ENCODE measurements at regions of chr12 and their contacts with region 1.

Region 1: DNA sequence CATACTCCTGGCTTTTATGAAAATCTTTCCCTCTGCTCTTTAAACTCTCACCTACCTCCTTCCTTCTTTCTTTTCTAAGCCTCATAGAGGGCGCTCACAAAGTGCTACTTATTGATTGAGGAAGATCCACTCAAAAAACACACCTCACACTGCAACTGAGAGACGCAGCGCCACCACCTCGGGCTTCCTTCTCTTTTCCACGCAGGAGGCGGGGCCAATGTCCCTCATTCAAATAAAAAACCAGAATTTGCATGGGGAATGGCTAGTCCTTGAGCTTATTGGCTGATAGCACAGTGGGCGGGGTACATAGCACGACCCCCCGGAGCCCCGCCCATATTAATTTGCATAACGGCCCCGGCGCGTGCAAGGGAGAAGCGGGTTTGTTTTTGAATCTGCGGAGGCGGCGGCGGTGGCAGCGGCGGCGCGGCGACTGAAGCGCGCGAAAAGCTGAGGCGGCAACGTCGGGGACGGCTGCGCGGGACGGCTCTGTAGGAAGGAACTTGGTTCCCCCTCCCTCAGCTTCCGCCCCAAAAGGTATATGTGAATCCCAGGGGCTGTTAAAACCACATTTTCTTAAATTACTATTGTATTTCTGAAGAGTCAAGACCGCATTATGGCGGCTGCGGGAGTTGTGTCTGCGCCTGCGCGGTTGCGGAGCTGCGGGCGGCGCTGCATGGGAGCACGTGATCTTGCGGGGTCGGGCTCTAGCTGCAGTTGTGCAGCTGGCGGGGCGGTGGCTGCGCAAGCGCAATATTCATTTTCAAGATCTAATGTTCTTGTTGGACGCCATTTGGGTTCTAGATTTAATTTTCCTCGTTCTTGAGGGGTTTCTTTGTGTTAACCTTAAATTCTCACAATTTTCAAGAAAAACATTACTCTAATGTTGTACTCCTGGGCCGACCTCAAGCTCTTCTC is at the start of gene ATF7IP:
- DNase-seq: peak; percentile 90 to 99 (median 95)
- ATAC-seq: peak; percentile 86
- H3K4me3 ChIP-seq: peak within 1 kb of the TSS; percentile 60
- H3K4me3 Mint-ChIP-seq: peak within 1 kb of the TSS; percentile 95
- H3K27ac ChIP-seq: peak within 1 kb of the TSS; percentile 89 to 93
- H3K27ac Mint-ChIP-seq: peak within 1 kb of the TSS; percentile 96
- H3K4me1 ChIP-seq: peaks cover 17% of the 10 kb centered on the region
- H3K4me1 Mint-ChIP-seq: peaks cover 51% of the 10 kb centered on the region
- H3K27me3 ChIP-seq: no peaks in the 10 kb centered on the region
- H3K27me3 Mint-ChIP-seq: no peaks in the 10 kb centered on the region
- CTCF ChIP-seq: peak; percentile 58
- total RNA-seq, gene ATF7IP: 134 to 143 TPM

Region 2: DNA sequence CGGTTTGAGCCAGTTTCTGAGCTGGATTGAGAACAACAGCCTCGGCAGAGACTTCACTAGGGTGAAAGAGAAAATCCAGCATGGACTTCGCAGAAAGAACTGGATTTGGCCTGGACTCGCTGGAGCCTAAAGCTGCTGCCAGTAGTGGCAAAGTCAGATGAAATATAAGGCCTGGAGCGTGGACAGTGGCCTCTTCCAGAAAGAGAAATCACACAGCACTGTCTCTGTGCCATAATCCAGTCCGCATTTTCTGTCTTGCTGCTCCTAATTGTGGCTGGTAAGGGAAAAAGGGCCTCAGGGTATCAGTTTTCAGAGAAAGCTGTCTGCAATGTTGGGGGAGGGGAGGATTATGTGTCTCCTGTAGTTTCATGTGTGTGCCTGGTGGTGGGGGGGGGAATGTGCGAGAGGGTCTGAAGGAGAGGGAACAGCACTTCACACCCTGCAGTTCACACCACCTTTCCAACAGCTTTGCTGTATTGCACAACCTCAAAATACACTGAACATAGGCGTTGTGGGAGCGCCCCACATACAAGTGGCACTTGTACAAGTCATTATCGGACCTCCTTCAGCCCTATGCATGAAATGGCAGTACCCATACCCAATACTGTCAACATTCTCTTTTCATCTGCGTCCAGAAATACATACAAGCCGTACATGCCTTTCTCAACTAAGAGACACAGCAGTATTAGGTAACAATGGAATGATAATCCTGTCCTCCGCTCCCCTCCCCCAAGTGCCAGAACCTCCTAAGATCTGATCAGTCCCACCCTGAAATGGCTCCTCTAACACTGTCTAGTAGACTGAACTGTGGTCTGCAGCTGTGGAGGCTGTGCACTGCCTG is 107.6 kb before region 1 on chr12:
- CTCF ChIA-PET with region 1: interaction called, 10 read pairs
- POLR2A ChIA-PET with region 1: interaction called, 102 read pairs
- intact Hi-C with region 1: loop called (anchors 1 to 2 kb)
- DNase-seq: peak; percentile 57 to 95 (median 68)
- ATAC-seq: peak; percentile 54
- H3K4me3 ChIP-seq: peak overlapping the region; percentile 21
- H3K4me3 Mint-ChIP-seq: peak overlapping the region; percentile 83
- H3K27ac ChIP-seq: peak overlapping the region; percentile 68 to 84
- H3K27ac Mint-ChIP-seq: peak overlapping the region; percentile 98
- H3K4me1 ChIP-seq: peaks cover 43% of the 10 kb centered on the region
- H3K4me1 Mint-ChIP-seq: peaks cover 55% of the 10 kb centered on the region
- H3K27me3 ChIP-seq: no peaks in the 10 kb centered on the region
- H3K27me3 Mint-ChIP-seq: no peaks in the 10 kb centered on the region
- CTCF ChIP-seq: no peak

Region 3: GRCh38 chr12:14384783-14385638 is 19.5 kb after region 1 on chr12:
- CTCF ChIA-PET with region 1: interaction called, 16 read pairs
- POLR2A ChIA-PET with region 1: interaction called, 201 read pairs
- intact Hi-C with region 1: loop called (anchors 1 to 2 kb)
- DNase-seq: peak in 13 of 14 experiments; percentile 17 to 95 (median 43)
- ATAC-seq: peak; percentile 92
- H3K4me3 ChIP-seq: peak overlapping the region; percentile 48
- H3K4me3 Mint-ChIP-seq: peak overlapping the region; percentile 77
- H3K27ac ChIP-seq: peak overlapping the region; percentile 23 to 37
- H3K27ac Mint-ChIP-seq: peak overlapping the region; percentile 91
- H3K4me1 ChIP-seq: peaks cover 26% of the 10 kb centered on the region
- H3K4me1 Mint-ChIP-seq: peaks cover 72% of the 10 kb centered on the region
- H3K27me3 ChIP-seq: no peaks in the 10 kb centered on the region
- H3K27me3 Mint-ChIP-seq: no peaks in the 10 kb centered on the region
- CTCF ChIP-seq: no peak

Region 4: DNA sequence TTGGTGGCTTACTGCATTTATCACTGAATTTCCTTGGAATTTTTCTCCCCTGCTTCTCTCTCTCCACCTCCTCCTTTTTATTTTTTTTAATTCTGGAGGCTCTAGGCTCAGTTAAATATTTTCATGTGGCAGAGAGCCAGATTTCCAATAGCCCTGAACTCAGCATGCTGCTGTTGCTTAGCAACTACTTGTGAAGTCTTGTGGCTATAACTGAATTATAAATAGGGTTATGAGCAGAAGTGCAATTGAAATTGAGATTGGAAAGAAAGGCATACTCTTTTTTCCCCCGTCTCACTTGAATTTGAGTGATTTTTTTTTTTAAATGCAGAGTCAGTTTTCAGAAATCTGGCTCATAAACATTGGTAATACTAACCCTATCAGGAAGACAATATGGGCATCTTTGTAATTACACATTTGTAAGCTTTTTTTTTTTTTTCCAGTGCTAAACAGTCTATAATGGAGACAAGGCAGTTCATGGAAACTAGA is 38.2 kb after region 1 on chr12:
- CTCF ChIA-PET with region 1: interaction called, 6 read pairs
- POLR2A ChIA-PET with region 1: interaction called, 18 read pairs
- intact Hi-C with region 1: no loop called
- DNase-seq: peak in 4 of 14 experiments; percentile 16 to 85 (median 80)
- ATAC-seq: peak; percentile 74
- H3K4me3 ChIP-seq: no peak overlapping the region
- H3K4me3 Mint-ChIP-seq: peak overlapping the region; percentile 69
- H3K27ac ChIP-seq: peak overlapping the region in 1 of 2 donors; percentile 55
- H3K27ac Mint-ChIP-seq: peak overlapping the region; percentile 91
- H3K4me1 ChIP-seq: peaks cover 36% of the 10 kb centered on the region
- H3K4me1 Mint-ChIP-seq: peaks cover 77% of the 10 kb centered on the region
- H3K27me3 ChIP-seq: no peaks in the 10 kb centered on the region
- H3K27me3 Mint-ChIP-seq: no peaks in the 10 kb centered on the region
- CTCF ChIP-seq: no peak

Region 5: DNA sequence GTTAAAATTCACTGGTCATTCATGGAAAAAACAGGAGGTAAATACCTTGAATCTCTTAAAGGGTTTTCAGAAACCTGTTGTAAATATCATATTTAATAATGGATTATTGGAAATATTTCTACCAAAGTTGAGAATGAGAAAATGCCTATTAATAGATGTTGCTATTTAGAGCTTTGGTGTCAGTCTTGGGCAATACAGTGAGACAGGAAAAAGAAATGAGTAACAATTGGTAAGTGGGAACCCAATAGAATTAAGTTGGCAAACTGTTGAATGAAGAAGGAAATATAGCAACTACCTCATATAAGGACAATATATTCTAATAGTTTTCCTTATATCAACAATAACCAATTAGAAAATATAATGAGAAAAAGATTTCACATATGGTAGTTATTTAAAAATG is 78.0 kb after region 1 on chr12:
- CTCF ChIA-PET with region 1: no interaction called
- POLR2A ChIA-PET with region 1: no interaction called
- intact Hi-C with region 1: no loop called
- DNase-seq: no peak
- ATAC-seq: no peak
- H3K4me3 ChIP-seq: no peak overlapping the region
- H3K4me3 Mint-ChIP-seq: no peak overlapping the region
- H3K27ac ChIP-seq: no peak overlapping the region
- H3K27ac Mint-ChIP-seq: peak overlapping the region; percentile 12
- H3K4me1 ChIP-seq: no peaks in the 10 kb centered on the region
- H3K4me1 Mint-ChIP-seq: peaks cover 43% of the 10 kb centered on the region
- H3K27me3 ChIP-seq: no peaks in the 10 kb centered on the region
- H3K27me3 Mint-ChIP-seq: no peaks in the 10 kb centered on the region
- CTCF ChIP-seq: no peak

Region 6: DNA sequence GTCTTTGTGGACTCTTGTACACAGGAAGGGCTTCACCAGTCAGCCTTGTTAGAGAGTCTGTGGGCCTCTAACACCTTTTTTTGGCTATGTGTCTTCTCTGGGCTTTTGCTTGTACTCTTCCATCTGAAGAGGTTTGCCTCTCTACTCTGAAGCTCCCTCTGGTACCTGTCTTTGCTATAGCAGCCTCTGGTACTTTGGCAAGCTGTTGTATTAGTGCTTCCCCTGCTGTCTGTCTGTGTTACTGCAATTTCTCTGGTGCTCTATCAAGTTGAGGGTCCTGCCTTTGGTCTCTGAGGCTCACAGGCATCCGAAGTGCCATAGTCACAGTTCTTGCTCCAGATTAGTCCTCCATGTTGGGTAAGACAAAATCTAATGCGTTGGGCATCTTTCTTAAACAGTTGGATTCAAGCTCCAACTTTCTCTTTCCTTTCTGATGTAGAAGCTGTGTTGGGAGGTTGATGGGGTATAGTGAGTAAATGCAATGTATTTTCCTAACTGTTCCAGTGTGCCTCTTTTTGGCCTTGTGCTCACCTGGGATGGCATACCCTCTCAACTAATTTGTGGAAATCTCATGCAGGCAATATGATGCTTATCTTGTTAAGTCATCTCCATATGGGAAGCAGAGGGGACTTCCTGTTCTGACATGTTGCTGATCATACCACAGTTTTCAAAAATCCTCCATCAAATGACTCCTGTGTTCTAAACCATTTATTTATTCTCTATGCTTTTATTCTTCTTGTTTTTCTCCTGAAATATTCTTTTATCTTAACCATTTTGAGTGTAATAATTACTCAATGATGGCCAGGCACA is 88.8 kb after region 1 on chr12:
- CTCF ChIA-PET with region 1: interaction called, 3 read pairs
- POLR2A ChIA-PET with region 1: interaction called, 13 read pairs
- intact Hi-C with region 1: no loop called
- DNase-seq: peak in 4 of 14 experiments; percentile 8 to 68 (median 58)
- ATAC-seq: peak; percentile 81
- H3K4me3 ChIP-seq: no peak overlapping the region
- H3K4me3 Mint-ChIP-seq: no peak overlapping the region
- H3K27ac ChIP-seq: no peak overlapping the region
- H3K27ac Mint-ChIP-seq: peak overlapping the region; percentile 64
- H3K4me1 ChIP-seq: peaks cover 10% of the 10 kb centered on the region
- H3K4me1 Mint-ChIP-seq: peaks cover 62% of the 10 kb centered on the region
- H3K27me3 ChIP-seq: no peaks in the 10 kb centered on the region
- H3K27me3 Mint-ChIP-seq: no peaks in the 10 kb centered on the region
- CTCF ChIP-seq: peak; percentile 40

Region 7: DNA sequence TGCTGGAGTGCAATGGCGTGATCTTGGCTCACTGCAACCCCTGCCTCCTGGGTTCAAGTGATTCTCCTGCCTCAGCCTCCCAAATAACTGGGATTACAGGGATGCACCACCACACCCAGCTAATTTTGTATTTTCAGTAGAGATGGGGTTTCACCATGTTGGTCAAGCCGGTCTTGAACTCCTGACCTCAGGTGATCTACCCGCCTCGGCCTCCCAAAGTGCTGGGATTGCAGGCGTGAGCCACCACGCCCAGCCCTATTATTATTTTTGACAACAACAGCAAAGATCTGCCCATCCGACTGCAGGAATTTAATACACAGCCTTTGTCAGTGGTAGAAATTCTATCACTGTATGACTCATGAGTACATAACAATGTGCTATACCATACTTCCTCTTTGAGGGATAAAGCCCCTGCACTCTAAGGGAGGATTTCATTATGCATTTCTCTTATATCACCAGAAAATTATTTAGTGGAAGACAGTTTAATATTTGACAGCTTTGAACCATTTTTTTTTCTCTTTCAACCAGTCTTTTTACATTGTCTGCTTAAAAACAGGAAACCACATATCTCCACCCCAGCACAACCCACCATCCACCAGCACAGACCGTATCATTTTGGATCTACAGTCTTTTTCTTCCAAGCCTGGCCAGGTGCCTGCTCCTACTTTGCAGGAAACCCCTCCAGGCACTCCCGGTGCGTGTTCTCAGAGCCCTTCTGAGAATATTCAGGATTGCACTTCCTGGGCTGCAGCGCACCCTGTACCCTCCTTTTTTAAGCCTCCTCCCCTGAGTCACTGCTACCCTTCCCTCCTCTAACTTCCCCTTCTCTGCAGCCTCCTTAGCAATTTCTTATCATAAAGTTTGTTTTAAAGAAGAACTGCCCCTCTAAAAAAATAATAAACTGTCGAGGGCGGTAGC is 595.3 kb after region 1 on chr12:
- CTCF ChIA-PET with region 1: no interaction called
- POLR2A ChIA-PET with region 1: interaction called, 7 read pairs
- intact Hi-C with region 1: loop called in 1 of 2 experiments (anchors 5 kb)
- DNase-seq: peak in 12 of 14 experiments; percentile 45 to 79 (median 55)
- ATAC-seq: peak; percentile 40
- H3K4me3 ChIP-seq: peak overlapping the region; percentile 80
- H3K4me3 Mint-ChIP-seq: peak overlapping the region; percentile 97
- H3K27ac ChIP-seq: peak overlapping the region; percentile 89 to 90
- H3K27ac Mint-ChIP-seq: peak overlapping the region; percentile 94
- H3K4me1 ChIP-seq: peaks cover 41% of the 10 kb centered on the region
- H3K4me1 Mint-ChIP-seq: peaks cover 73% of the 10 kb centered on the region
- H3K27me3 ChIP-seq: no peaks in the 10 kb centered on the region
- H3K27me3 Mint-ChIP-seq: no peaks in the 10 kb centered on the region
- CTCF ChIP-seq: no peak

Measured in CD4-positive, alpha-beta T cell (primary cell).